ENCODE measurements at regions of chr10 and their contacts with region 1.

Region 1: DNA sequence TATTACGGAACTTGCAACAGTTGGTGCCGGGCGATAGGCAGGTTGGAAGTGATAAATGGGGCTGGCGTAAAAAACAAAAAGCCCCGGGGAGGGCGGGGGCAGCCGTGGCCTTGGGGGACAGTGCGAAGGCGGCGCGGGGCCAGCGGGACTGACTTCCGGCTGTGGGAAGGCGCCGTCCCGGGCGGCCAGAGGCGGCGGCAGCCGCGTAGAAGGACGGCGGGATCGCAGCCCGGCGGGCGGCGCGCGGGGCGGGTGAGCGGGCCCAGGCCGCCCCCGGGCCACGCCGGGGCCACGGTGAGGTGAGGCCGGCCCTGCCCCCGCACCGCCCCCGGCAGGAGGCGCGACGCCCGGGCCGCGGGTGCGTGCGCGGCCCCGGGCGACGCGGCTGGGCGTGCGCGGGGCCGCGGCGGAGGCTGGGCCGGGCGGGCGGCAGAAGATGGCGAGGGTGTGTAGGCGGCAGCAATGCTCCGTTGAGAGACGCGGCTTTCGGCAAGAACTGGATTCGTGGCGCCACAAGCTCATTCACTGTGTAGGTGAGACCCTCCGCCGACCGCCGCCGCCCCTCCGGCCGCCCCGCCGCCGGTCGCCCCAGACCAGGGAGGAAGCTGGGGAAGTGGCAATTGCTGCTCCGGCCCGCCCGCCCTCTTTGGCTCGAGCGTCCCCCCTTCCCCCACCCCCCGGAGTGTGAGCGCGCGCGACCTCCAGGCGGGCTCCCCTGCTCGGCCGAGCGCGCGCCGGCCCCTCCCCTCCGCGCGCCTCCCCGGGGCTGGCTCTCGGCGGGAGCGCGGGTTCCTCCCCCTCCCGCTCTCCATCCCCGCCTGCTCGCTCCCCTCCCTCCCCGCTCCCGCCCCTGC is at the start of gene LCOR:
- DNase-seq: peak; percentile 83 to 88
- ATAC-seq: peak; percentile 74
- total RNA-seq, gene LCOR: 82.4 to 93.7 TPM

Region 2: GRCh38 chr10:96374985-96375830 is 456.9 kb before region 1 on chr10:
- intact Hi-C with region 1: loop called in 1 of 2 experiments (anchors 10 kb)
- DNase-seq: peak; percentile 80 to 86
- ATAC-seq: peak; percentile 93

Measured in left colon (tissue), 2 donors.